ENCODE measurements at regions of chr6 and their contacts with region 1.

Region 1: DNA sequence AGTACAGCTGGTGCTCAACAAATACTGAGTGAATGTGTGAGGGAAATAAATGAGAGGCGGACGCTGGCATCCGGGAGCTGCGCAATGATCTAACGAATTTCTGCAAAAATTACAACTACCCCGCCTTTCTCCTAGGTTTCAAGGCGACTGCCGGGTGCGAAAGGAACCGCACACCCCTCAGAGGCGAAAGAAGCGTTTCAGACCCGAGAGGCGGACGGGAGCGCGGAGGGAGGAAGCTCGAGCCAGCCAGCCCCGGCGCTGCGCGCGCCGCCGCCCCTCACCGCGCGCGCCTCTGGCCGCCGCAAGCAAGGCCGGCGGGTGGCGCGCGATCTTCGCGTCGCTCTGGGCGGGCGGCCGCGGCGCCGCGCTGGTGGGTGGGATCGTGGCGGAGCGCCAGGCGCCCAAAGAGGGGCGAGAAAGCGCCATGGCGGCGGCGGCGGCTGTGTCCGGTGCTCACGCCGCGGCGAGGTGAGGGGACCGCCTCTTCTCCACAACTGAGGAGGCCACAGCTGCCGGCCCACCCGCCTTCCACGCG is at the start of gene BLTP3A:
- DNase-seq: peak; percentile 33 to 81 (median 54)
- H3K4me3 ChIP-seq: peak within 1 kb of the TSS; percentile 62 to 98 (median 91)
- H3K27ac ChIP-seq: peak within 1 kb of the TSS in 58 of 59 donors; percentile 66 to 97 (median 93)
- H3K27me3 ChIP-seq: no peaks in the 10 kb centered on the region
- CTCF ChIP-seq: peak in 24 of 56 donors; percentile 2 to 52 (median 26)
- total RNA-seq, gene BLTP3A: 9.5 to 19.4 (median 14.4) TPM

Region 2: GRCh38 chr6:34757687-34758274 is 34.0 kb before region 1 on chr6:
- intact Hi-C with region 1: loop called in 1 of 2 experiments (anchors 1 kb)
- DNase-seq: no peak
- H3K4me3 ChIP-seq: peak overlapping the region; percentile 62 to 99 (median 84)
- H3K27ac ChIP-seq: peak overlapping the region in 57 of 59 donors; percentile 21 to 98 (median 94)
- H3K27me3 ChIP-seq: no peaks in the 10 kb centered on the region
- CTCF ChIP-seq: no peak

Region 3: GRCh38 chr6:35139908-35140655 is 348.3 kb after region 1 on chr6:
- intact Hi-C with region 1: loop called (anchors 5 to 10 kb)
- DNase-seq: peak in 6 of 10 donors; percentile 32 to 55 (median 44)
- H3K4me3 ChIP-seq: peak overlapping the region in 1 of 59 donors; percentile 15
- H3K27ac ChIP-seq: no peak overlapping the region
- H3K27me3 ChIP-seq: peaks cover 0 to 11% (median 0%) of the 10 kb centered on the region in 45 donors
- CTCF ChIP-seq: peak; percentile 77 to 98 (median 88)

Region 4: DNA sequence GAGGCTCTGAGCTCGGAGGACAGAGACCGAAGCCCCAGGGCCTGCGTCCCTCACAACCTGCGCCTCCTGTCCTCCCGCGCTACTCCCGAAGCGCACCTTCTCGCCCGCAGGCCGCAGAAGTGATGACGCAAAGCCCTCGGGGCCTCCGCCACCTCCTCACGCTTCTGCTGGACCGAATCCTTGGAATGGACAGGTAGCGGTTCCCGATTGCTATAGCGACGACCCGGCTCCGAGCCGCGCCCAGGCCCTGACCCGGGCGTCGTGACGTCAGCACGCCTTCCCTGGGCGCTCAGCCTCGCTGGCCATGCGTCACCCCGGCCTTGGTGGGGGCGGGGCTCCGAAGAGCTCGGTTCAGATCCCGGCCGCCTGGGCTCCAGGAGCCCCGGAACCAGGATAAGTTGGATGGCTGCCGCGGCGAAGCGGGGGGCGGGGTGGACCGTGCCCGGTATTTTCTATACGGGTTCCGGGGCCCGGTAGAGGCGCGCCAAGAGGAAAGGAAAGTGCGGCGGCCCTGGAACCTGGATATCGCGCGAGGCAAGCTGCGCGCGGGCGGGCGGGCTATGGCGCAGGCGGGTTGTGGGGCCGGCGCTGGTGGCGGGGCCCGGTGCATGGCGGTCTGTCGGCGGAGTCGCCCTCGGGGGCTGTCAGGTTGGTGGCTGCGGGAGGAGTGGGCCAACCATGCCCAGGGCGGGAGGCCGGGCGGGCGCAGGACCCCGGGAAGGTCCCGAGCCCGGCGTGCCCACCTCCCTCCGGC is 467.6 kb after region 1 on chr6 and contains the start of gene ZNF76:
- intact Hi-C with region 1: loop called in 1 of 2 experiments (anchors 5 kb)
- DNase-seq: peak; percentile 94 to 99 (median 98)
- H3K4me3 ChIP-seq: peak within 1 kb of the TSS; percentile 71 to 100 (median 93)
- H3K27ac ChIP-seq: peak within 1 kb of the TSS; percentile 80 to 99 (median 96)
- H3K27me3 ChIP-seq: no peaks in the 10 kb centered on the region
- CTCF ChIP-seq: peak in 26 of 56 donors; percentile 5 to 49 (median 25)
- total RNA-seq, gene ZNF76: 28.7 to 73.1 (median 45.8) TPM